Activated CD8-positive, alpha-beta T cell treated with anti-CD3 and anti-CD28 coated beads, Interleukin-2, amount 10 ng/mL, durations not matched to agents 7 days and 5 days (primary cell): ENCODE measurements at regions of chr22 and their contacts with region 1.

Region 1: DNA sequence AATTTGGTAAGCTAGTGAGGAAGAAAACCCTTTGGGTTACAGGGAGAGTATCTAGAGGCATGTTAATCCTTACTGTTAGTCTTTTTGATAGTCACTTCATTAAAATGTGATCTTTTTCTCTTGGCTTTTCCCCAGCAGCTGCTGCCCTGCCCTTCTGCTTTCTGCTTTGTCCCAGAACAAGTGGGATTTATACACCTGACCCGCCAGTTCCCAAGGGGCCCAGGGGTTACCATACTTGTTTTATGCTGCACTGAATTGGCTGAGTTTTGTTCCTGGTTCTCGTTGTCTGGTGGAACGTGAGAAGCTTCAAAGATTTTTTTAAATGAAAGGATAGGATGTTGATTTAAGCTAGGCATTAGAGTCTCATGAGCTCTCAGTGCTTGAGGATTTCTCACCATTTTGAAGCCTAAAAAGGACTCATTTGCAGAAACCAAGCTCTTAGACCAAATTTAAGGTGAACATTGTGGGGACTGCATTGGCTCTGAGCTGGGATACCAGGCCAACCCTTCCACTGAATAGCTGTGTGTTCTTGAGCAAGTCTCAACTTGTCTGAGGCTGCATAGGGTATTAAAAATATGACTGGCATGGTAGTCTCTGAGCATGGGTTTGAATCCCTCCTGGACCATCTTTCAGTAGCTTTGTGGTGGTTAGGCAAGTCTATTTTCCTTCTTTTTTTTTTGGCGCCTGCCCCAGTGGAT is 6.6 kb downstream of the LIMK2 start:
- DNase-seq: no peak
- ATAC-seq: no peak
- H3K4me3 Mint-ChIP-seq: no peak overlapping the region
- H3K27ac Mint-ChIP-seq: peak overlapping the region; percentile 47
- H3K4me1 Mint-ChIP-seq: peaks cover 47% of the 10 kb centered on the region
- H3K27me3 Mint-ChIP-seq: no peaks in the 10 kb centered on the region

Region 2: GRCh38 chr22:31139866-31140716 is 78.6 kb before region 1 on chr22 and contains the start of gene PLA2G3:
- CTCF ChIA-PET with region 1: no interaction called
- POLR2A ChIA-PET with region 1: no interaction called
- DNase-seq: no peak
- ATAC-seq: peak; percentile 21
- H3K4me3 Mint-ChIP-seq: no peak within 1 kb of the TSS
- H3K27ac Mint-ChIP-seq: no peak within 1 kb of the TSS
- H3K4me1 Mint-ChIP-seq: peaks cover 9% of the 10 kb centered on the region
- H3K27me3 Mint-ChIP-seq: no peaks in the 10 kb centered on the region
- total RNA-seq, gene PLA2G3: not detected

Region 3: DNA sequence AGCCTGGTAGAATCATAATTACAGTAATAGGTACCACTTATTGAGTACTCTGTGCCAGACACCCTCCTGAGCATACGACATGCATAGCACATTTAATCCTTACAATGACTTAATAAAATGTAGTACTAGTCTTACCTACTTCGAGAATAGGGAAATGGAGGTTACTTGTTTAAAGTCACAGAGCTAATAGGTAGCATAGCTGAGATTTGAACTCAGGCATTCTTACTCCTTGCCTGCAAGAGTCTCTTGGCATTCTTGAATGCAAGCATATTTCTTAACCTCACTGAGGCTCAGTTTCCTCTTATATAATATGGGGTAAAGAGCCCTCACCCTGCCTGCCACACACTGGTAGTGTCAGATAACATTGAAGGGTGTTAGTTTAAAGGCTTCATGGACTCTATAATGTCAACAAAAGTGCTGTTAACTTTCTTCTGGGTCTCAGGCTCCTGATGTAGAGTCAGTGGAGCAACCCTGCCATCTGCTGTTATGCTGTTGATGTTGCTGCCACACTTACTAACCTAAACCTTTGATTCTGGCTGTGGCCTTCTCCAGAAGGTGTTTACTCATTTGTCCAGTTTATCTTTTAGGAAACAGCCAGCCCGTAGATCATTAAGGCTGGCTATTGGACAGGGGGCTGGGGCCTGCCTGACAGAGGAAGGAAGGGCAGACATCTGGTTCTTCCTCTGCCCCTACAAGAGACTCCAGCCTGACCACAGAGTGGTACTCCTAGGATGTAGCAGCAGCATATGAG is 12.3 kb after region 1 on chr22:
- CTCF ChIA-PET with region 1: interaction called, 117 read pairs
- POLR2A ChIA-PET with region 1: interaction called, 9 read pairs
- DNase-seq: peak; percentile 63
- ATAC-seq: peak; percentile 68
- H3K4me3 Mint-ChIP-seq: no peak overlapping the region
- H3K27ac Mint-ChIP-seq: no peak overlapping the region
- H3K4me1 Mint-ChIP-seq: peaks cover 56% of the 10 kb centered on the region
- H3K27me3 Mint-ChIP-seq: no peaks in the 10 kb centered on the region